Breast epithelium (tissue), 4 donors: ENCODE measurements at regions of chr12 and their contacts with region 1.

Region 1: DNA sequence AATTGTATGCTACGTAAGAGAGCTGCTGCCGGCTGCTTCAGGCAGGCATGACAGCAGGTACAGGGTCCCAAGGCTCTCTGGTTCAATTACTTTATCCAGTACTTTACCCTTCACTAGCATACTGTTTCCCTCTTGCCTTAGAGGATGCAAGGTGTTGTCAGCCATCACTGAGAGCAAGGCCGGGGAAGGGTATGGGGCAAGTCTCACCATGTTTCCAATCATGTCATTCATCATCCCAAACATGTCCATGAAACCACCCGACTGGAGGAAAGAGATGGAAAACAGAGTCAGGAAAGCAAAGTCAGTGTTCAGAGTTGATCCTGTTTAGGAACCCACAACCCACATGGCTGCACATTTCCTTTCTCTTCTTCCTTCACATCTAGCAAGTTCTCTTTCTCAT is 2.4 kb downstream of the MLF2 start:
- DNase-seq: no peak
- H3K4me3 ChIP-seq: no peak overlapping the region
- H3K27ac ChIP-seq: no peak overlapping the region
- H3K4me1 ChIP-seq: peaks cover 0 to 9% of the 10 kb centered on the region in 2 donors
- H3K27me3 ChIP-seq: no peaks in the 10 kb centered on the region
- CTCF ChIP-seq: no peak
- POLR2A ChIP-seq: no peak

Region 2: GRCh38 chr12:6764011-6764828 is 13.7 kb after region 1 on chr12:
- intact Hi-C with region 1: no loop called
- DNase-seq: peak; percentile 88 to 96
- H3K4me3 ChIP-seq: peak overlapping the region; percentile 15 to 99 (median 75)
- H3K27ac ChIP-seq: peak overlapping the region; percentile 95 to 100
- H3K4me1 ChIP-seq: peaks cover 11 to 14% of the 10 kb centered on the region in 2 donors
- H3K27me3 ChIP-seq: no peaks in the 10 kb centered on the region
- CTCF ChIP-seq: no peak
- POLR2A ChIP-seq: peak; percentile 28

Region 3: GRCh38 chr12:6833189-6833890 is 82.8 kb after region 1 on chr12:
- intact Hi-C with region 1: loop called (anchors 1 kb)
- DNase-seq: no peak
- H3K4me3 ChIP-seq: no peak overlapping the region
- H3K27ac ChIP-seq: no peak overlapping the region
- H3K4me1 ChIP-seq: peaks cover 0 to 6% of the 10 kb centered on the region in 2 donors
- H3K27me3 ChIP-seq: no peaks in the 10 kb centered on the region
- CTCF ChIP-seq: no peak
- POLR2A ChIP-seq: no peak

Region 4: DNA sequence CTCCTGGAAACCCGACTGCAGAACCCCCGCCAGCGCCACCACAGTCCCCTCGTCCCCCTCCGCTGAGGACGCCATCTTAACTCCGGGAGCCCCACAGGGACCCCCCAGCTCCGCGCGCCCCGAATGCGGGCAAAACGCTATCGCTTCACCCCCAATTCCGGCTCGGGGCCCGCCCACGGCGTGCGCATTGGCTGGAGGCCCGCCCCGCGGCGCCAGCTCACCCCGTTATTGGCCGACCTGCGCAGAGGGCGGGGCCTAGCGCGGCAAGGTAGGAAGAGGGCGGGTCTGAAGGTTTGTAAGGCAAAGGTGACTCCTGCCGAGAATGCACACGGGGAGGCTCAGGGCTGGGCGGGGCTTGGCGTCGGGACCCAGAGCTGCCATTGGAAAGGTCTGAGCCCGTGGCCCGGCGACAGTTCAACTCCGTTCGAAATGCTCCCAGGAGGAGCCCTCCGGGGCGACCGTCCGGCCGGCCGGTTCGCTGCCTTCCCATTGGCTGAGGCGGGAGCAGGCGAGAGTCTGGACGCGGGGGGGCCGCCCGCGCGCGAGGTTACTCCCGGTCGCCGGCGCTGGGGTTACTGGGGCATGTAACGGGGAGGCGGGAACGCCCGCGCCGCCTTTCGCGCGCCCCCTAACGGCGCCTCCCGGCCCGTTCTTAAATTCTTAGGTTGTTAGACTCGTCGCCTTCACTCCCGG is 268.0 kb after region 1 on chr12 and contains the start of gene LPCAT3:
- intact Hi-C with region 1: no loop called
- DNase-seq: peak; percentile 97
- H3K4me3 ChIP-seq: peak within 1 kb of the TSS; percentile 64 to 88 (median 86)
- H3K27ac ChIP-seq: peak within 1 kb of the TSS; percentile 96 to 97
- H3K4me1 ChIP-seq: peaks cover 0 to 8% of the 10 kb centered on the region in 2 donors
- H3K27me3 ChIP-seq: no peaks in the 10 kb centered on the region
- CTCF ChIP-seq: peak; percentile 57 to 91 (median 91)
- POLR2A ChIP-seq: peak; percentile 71
- total RNA-seq, gene LPCAT3: 28.3 to 67.5 (median 63.7) TPM

Region 5: DNA sequence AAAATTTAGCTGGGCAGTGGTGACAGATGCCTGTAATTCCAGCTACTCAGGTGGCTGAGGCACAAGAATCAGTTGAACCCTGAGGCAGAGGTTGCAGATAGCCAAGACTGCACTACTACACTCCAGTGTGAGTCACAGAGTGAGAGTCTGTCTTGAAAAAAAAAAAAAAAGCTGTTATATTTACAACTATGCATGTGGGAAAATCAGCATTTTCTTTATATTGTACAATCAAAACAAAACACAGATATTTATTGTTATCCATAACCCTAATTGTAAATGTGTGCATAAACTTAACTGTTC is 329.3 kb after region 1 on chr12:
- intact Hi-C with region 1: no loop called
- DNase-seq: no peak
- H3K4me3 ChIP-seq: no peak overlapping the region
- H3K27ac ChIP-seq: peak overlapping the region; percentile 79 to 88
- H3K4me1 ChIP-seq: peaks cover 0 to 3% of the 10 kb centered on the region in 2 donors
- H3K27me3 ChIP-seq: no peaks in the 10 kb centered on the region
- CTCF ChIP-seq: no peak
- POLR2A ChIP-seq: no peak